Panc1 (cell line): ENCODE measurements at regions of chr16 and their contacts with region 1.

Region 1: GRCh38 chr16:73196670-73197069 is 148.7 kb upstream of the ZFHX3 start:
- DNase-seq: peak; percentile 33
- ATAC-seq: no peak; the same call in 1 of the 2 replicates
- H3K4me3 ChIP-seq: no peak overlapping the region
- H3K27ac ChIP-seq: no peak overlapping the region
- H3K4me1 ChIP-seq: no peaks in the 10 kb centered on the region
- H3K27me3 ChIP-seq: no peaks in the 10 kb centered on the region
- CTCF ChIP-seq: peak; percentile 70

Region 2: DNA sequence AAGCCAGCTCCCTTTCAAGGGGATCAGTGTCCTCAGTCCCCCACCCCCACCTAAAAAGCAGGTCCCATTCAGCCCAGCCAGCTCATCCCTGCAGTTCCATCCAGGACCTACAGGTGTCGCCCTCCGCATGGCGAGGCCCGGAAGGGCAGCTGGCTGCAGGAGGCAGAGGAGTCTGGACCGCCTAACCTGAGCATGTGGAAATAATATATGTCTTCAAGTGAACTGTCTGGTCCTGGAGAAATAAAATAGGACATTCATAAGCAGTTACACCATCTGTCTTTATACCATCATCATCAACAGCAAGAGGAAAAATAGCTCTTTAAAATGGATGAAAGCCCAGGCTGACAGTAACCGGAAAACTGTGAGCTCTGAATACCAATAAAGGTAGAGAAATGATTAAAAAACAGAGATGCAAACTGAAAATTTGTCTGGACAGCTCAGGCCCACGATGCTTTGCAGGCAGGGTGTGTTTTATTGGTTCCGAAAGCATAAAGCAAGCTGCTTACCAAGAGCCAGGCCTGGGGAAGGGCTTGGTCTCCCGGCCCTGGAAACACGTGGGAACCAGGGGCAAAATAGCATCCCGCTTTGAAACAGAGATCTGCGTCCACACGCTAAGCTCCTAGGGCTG is 363.9 kb before region 1 on chr16:
- CTCF ChIA-PET with region 1: interaction called, 10 read pairs
- POLR2A ChIA-PET with region 1: no interaction called
- in situ Hi-C with region 1: no loop called
- intact Hi-C with region 1: no loop called
- DNase-seq: peak; percentile 59
- ATAC-seq: peak; percentile 87
- H3K4me3 ChIP-seq: no peak overlapping the region
- H3K27ac ChIP-seq: no peak overlapping the region
- H3K4me1 ChIP-seq: no peaks in the 10 kb centered on the region
- H3K27me3 ChIP-seq: no peaks in the 10 kb centered on the region
- CTCF ChIP-seq: peak; percentile 96

Region 3: GRCh38 chr16:73068541-73069401 is 127.9 kb before region 1 on chr16:
- CTCF ChIA-PET with region 1: no interaction called
- POLR2A ChIA-PET with region 1: no interaction called
- in situ Hi-C with region 1: no loop called
- intact Hi-C with region 1: loop called (anchors 10 kb)
- DNase-seq: no peak
- ATAC-seq: no peak
- H3K4me3 ChIP-seq: no peak overlapping the region
- H3K27ac ChIP-seq: no peak overlapping the region
- H3K4me1 ChIP-seq: peaks cover 4% of the 10 kb centered on the region; the same call in 1 of the 2 replicates
- H3K27me3 ChIP-seq: no peaks in the 10 kb centered on the region
- CTCF ChIP-seq: no peak

Region 4: DNA sequence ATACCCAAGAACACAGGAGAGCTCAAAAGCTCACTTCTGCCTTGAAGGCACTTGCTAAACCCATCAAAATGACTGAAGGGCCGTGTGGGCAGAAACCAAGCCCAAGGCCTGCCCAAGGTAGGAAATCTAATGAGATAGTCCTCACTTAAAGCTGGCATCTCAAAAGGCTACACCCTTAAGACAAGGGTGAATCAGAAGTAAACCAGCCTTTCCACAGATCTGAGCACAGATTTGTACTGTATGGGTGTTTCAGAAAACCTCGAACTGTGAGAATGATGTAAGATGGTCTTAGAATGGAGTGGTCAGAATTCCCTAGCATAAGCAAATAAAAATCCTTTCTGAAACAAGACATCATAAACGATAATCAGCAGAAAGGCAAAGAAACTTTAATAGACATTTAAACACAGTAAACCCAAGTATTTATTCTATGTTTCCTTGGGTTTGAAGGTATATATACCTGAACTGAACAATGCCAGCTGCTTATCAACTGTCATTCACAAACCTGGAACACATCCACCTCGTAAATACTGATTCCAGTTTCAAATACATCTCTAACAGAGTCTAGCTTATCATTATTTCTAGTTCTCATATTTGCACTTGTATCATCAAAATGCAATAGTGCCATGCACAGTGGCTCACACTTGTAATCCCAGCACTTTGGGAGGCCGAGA is 1372.4 kb after region 1 on chr16:
- CTCF ChIA-PET with region 1: no interaction called
- POLR2A ChIA-PET with region 1: no interaction called
- in situ Hi-C with region 1: no loop called
- intact Hi-C with region 1: no loop called
- DNase-seq: no peak
- ATAC-seq: no peak
- H3K4me3 ChIP-seq: no peak overlapping the region
- H3K27ac ChIP-seq: no peak overlapping the region
- H3K4me1 ChIP-seq: peaks cover 4% of the 10 kb centered on the region; the same call in 1 of the 2 replicates
- H3K27me3 ChIP-seq: no peaks in the 10 kb centered on the region
- CTCF ChIP-seq: no peak